ENCODE measurements at regions of chr14 and their contacts with region 1.

Region 1: DNA sequence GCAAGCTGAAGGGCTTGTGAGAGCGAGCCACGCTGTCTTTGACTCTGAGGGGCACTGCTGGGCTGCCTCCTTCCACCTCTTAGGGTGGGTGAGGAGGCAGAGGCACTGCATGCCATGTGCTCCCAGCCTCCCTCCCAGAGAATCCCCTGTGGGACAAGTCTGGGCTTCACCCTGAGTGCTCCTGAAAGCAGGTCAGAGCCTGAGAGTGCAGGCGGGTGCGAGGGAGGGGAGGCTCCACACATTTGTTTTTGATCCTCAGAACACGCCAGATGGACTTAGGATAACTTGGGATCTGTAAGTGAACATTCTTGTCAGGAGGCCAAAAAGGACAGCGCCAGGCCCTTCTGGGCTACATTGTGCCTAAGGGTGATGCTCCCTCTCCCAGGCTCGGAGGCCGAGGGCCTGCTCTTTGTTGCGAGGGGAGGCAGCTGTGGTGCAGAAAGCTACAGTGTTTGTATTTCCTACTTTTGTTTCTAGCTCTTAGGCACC is 155.4 kb downstream of the TMX1 start:
- DNase-seq: peak; percentile 95
- H3K4me3 Mint-ChIP-seq: peak overlapping the region; percentile 48
- H3K27ac Mint-ChIP-seq: peak overlapping the region; percentile 97
- H3K4me1 Mint-ChIP-seq: peaks cover 44% of the 10 kb centered on the region
- H3K27me3 Mint-ChIP-seq: no peaks in the 10 kb centered on the region
- CTCF ChIP-seq: no peak

Region 2: GRCh38 chr14:51283402-51284085 is 111.9 kb before region 1 on chr14:
- CTCF ChIA-PET with region 1: interaction called, 4 read pairs
- POLR2A ChIA-PET with region 1: interaction called, 4 read pairs
- intact Hi-C with region 1: loop called (anchors 1 kb)
- DNase-seq: peak; percentile 84
- H3K4me3 Mint-ChIP-seq: no peak overlapping the region
- H3K27ac Mint-ChIP-seq: no peak overlapping the region
- H3K4me1 Mint-ChIP-seq: peaks cover 12% of the 10 kb centered on the region
- H3K27me3 Mint-ChIP-seq: no peaks in the 10 kb centered on the region
- CTCF ChIP-seq: peak; percentile 80

Region 3: GRCh38 chr14:51369814-51370213 is 25.6 kb before region 1 on chr14:
- CTCF ChIA-PET with region 1: interaction called, 3 read pairs
- POLR2A ChIA-PET with region 1: interaction called, 15 read pairs
- intact Hi-C with region 1: loop called (anchors 1 kb)
- DNase-seq: peak; percentile 55
- H3K4me3 Mint-ChIP-seq: no peak overlapping the region
- H3K27ac Mint-ChIP-seq: no peak overlapping the region
- H3K4me1 Mint-ChIP-seq: peaks cover 20% of the 10 kb centered on the region
- H3K27me3 Mint-ChIP-seq: no peaks in the 10 kb centered on the region
- CTCF ChIP-seq: peak; percentile 47

Region 4: DNA sequence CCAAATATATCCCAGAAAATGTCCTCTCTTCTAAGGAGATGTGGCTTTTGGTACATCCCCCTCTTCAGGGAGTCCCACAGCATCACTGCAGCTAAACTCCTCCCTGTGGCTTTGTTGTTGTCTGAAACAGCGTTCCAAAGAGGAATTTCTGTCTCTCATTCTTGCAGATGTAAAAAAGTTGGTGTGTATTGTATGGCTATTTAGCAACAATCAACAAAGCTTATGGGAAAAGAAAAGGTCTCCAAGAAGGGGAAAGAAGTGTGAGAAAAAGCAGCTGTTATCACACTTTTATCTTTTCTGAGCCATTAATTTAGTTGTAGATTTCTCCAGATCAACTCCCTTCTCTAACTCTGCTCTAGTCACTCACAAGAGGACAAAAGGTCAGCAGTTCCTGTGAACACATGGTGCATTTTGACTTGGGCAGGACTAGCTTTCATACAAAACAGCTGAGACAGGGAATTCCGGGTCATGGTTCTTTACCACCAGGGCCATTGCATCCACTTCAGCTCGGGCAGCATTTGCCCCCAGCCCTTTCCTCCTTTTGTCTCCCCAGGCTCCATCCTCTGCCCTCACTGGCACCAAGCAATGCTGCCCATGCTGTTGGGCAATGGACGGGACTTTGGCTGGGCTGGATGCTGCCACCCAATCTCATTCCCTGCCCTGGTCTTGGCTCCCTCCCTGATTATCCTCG is 29.3 kb after region 1 on chr14:
- CTCF ChIA-PET with region 1: no interaction called
- POLR2A ChIA-PET with region 1: no interaction called
- intact Hi-C with region 1: no loop called
- DNase-seq: no peak
- H3K4me3 Mint-ChIP-seq: no peak overlapping the region
- H3K27ac Mint-ChIP-seq: no peak overlapping the region
- H3K4me1 Mint-ChIP-seq: no peaks in the 10 kb centered on the region
- H3K27me3 Mint-ChIP-seq: no peaks in the 10 kb centered on the region
- CTCF ChIP-seq: no peak

Region 5: GRCh38 chr14:51498411-51499227 is 103.2 kb after region 1 on chr14:
- CTCF ChIA-PET with region 1: no interaction called
- POLR2A ChIA-PET with region 1: interaction called, 12 read pairs
- intact Hi-C with region 1: no loop called
- DNase-seq: peak; percentile 76
- H3K4me3 Mint-ChIP-seq: peak overlapping the region; percentile 57
- H3K27ac Mint-ChIP-seq: peak overlapping the region; percentile 92
- H3K4me1 Mint-ChIP-seq: peaks cover 42% of the 10 kb centered on the region
- H3K27me3 Mint-ChIP-seq: no peaks in the 10 kb centered on the region
- CTCF ChIP-seq: no peak

Region 6: GRCh38 chr14:51547260-51547659 is 151.9 kb after region 1 on chr14:
- CTCF ChIA-PET with region 1: interaction called, 5 read pairs
- POLR2A ChIA-PET with region 1: interaction called, 17 read pairs
- intact Hi-C with region 1: loop called (anchors 1 kb)
- DNase-seq: peak; percentile 99
- H3K4me3 Mint-ChIP-seq: peak overlapping the region; percentile 46
- H3K27ac Mint-ChIP-seq: peak overlapping the region; percentile 94
- H3K4me1 Mint-ChIP-seq: peaks cover 45% of the 10 kb centered on the region
- H3K27me3 Mint-ChIP-seq: no peaks in the 10 kb centered on the region
- CTCF ChIP-seq: no peak

Measured in MCF 10A (cell line).